CD4-positive, alpha-beta memory T cell (primary cell): ENCODE measurements at regions of chr12 and their contacts with region 1.

Region 1: DNA sequence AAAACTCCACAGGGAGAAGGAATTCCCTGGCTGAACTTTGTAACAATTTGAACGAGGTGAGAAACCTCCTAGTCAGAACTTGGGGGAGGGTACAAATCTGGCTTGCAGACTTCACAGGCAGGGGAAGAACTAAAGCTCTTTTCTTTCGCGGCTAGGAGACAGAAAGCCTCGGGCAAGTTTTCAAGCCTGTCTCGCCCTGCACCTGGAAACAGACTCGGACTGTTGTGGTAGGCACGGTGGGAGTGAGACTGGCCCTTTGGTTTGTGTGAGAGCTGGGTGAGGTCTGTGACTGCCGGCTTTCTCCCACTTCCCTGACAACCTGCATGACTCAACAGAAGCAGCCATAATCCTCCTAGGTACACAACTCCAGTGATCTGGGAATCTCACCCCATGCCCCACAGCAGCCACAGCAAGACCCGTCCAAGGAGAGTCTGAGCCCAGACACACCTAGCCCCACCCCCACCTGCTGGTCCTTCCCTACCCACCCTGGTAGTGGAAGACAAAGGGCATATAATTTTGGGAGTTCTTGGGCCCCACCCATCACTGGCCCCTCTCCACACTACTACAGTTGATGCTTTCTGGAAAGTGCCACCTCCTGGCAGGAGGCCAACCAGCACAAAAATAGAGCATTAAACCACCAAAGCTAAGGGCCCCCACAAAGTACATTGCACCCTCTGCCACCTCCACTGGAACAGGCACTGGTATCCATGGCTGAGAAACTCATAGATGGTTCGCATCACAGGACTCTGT is 102.7 kb upstream of the ST8SIA1 start:
- DNase-seq: no peak
- H3K4me3 ChIP-seq: no peak overlapping the region
- H3K4me3 Mint-ChIP-seq: no peak overlapping the region
- H3K27ac ChIP-seq: no peak overlapping the region
- H3K27ac Mint-ChIP-seq: peak overlapping the region in 1 of 7 donors; percentile 9
- H3K4me1 ChIP-seq: no peaks in the 10 kb centered on the region
- H3K4me1 Mint-ChIP-seq: peaks cover 2 to 20% (median 7%) of the 10 kb centered on the region in 4 donors
- H3K27me3 ChIP-seq: no peaks in the 10 kb centered on the region
- H3K27me3 Mint-ChIP-seq: no peaks in the 10 kb centered on the region

Region 2: GRCh38 chr12:22409377-22410164 is 27.6 kb before region 1 on chr12:
- CTCF ChIA-PET with region 1: interaction called, 5 read pairs
- POLR2A ChIA-PET with region 1: interaction called, 12 read pairs
- intact Hi-C with region 1: loop called (anchors 2 kb)
- DNase-seq: peak; percentile 73 to 82 (median 75)
- H3K4me3 ChIP-seq: peak overlapping the region in 1 of 2 donors; percentile 51
- H3K4me3 Mint-ChIP-seq: peak overlapping the region; percentile 75 to 92 (median 86)
- H3K27ac ChIP-seq: peak overlapping the region; percentile 62
- H3K27ac Mint-ChIP-seq: peak overlapping the region; percentile 92 to 96 (median 94)
- H3K4me1 ChIP-seq: peaks cover 58% of the 10 kb centered on the region
- H3K4me1 Mint-ChIP-seq: peaks cover 27 to 47% (median 40%) of the 10 kb centered on the region in 4 donors
- H3K27me3 ChIP-seq: no peaks in the 10 kb centered on the region
- H3K27me3 Mint-ChIP-seq: no peaks in the 10 kb centered on the region